Panc1 (cell line): ENCODE measurements at regions of chr6 and their contacts with region 1.

Region 1: GRCh38 chr6:33839399-33840047 is 35.7 kb upstream of the MLN start:
- DNase-seq: no peak
- ATAC-seq: peak; percentile 40
- H3K4me3 ChIP-seq: no peak overlapping the region
- H3K27ac ChIP-seq: peak overlapping the region; percentile 88
- H3K4me1 ChIP-seq: peaks cover 57% of the 10 kb centered on the region
- H3K27me3 ChIP-seq: no peaks in the 10 kb centered on the region
- CTCF ChIP-seq: no peak

Region 2: GRCh38 chr6:32369675-32370074 is 1469.8 kb before region 1 on chr6:
- CTCF ChIA-PET with region 1: no interaction called
- POLR2A ChIA-PET with region 1: no interaction called
- in situ Hi-C with region 1: no loop called
- intact Hi-C with region 1: no loop called
- DNase-seq: peak; percentile 30
- ATAC-seq: no peak; the same call in 1 of the 2 replicates
- H3K4me3 ChIP-seq: no peak overlapping the region
- H3K27ac ChIP-seq: no peak overlapping the region
- H3K4me1 ChIP-seq: no peaks in the 10 kb centered on the region
- H3K27me3 ChIP-seq: no peaks in the 10 kb centered on the region
- CTCF ChIP-seq: no peak

Region 3: GRCh38 chr6:33850869-33851541 is 11.5 kb after region 1 on chr6:
- CTCF ChIA-PET with region 1: interaction called, 14 read pairs
- POLR2A ChIA-PET with region 1: interaction called, 3 read pairs
- in situ Hi-C with region 1: no loop called
- intact Hi-C with region 1: no loop called
- DNase-seq: no peak
- ATAC-seq: no peak
- H3K4me3 ChIP-seq: no peak overlapping the region
- H3K27ac ChIP-seq: no peak overlapping the region
- H3K4me1 ChIP-seq: no peaks in the 10 kb centered on the region; the same call in 1 of the 2 replicates
- H3K27me3 ChIP-seq: no peaks in the 10 kb centered on the region
- CTCF ChIP-seq: no peak